CD4-positive, alpha-beta memory T cell (primary cell): ENCODE measurements at regions of chr3 and their contacts with region 1.

Region 1: DNA sequence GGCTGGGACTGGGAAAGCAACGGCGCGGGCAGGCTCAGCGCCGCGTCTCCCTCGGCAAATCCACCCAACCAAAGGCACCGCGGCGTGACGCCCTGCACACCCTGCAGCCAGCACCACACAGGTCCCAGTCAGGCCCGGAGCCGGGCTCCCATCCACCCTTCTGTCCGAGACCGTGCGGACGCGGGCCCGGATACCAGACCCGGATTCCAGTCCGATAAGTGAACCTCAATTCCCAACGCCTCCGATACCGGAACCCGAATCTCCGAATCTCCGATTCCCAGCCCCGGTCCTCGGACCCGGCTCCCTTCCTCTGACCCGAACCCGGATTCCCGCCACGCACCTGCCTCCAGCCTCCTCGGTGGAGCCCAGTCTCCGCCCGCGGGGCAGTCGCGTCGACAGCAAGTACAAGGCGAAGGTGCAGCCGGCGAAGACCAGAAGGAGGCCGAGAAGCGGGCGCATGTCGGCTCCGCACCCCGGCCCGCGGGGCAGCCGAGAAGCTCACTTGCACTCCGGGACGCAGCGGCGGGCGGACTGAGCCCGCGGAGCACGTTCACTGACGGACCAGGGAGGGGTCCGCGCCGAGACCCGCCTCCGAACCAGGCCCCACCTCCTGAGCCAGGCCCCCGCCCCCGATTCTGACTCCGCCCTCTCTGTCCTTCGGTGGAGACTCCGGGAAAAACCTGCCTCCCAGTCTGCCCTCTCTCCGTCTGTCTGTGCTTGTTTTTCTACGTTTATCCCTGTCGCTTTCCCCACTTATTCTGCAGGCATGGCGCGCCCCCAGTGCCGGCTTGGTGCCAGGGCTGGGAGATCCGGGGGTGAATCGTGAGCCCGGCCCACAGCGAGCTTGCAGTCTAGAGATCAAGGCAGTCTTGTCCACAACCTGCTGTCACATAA is at the start of gene TMEM41A:
- DNase-seq: peak; percentile 81 to 88 (median 87)
- H3K4me3 ChIP-seq: peak within 1 kb of the TSS; percentile 72 to 86
- H3K4me3 Mint-ChIP-seq: peak within 1 kb of the TSS; percentile 88 to 98 (median 94)
- H3K27ac ChIP-seq: peak within 1 kb of the TSS; percentile 64
- H3K27ac Mint-ChIP-seq: peak within 1 kb of the TSS; percentile 85 to 94 (median 91)
- H3K4me1 ChIP-seq: peaks cover 23% of the 10 kb centered on the region
- H3K4me1 Mint-ChIP-seq: peaks cover 4 to 38% (median 21%) of the 10 kb centered on the region in 4 donors
- H3K27me3 ChIP-seq: no peaks in the 10 kb centered on the region
- H3K27me3 Mint-ChIP-seq: no peaks in the 10 kb centered on the region
- total RNA-seq, gene TMEM41A: 26.5 to 28.0 TPM

Region 2: DNA sequence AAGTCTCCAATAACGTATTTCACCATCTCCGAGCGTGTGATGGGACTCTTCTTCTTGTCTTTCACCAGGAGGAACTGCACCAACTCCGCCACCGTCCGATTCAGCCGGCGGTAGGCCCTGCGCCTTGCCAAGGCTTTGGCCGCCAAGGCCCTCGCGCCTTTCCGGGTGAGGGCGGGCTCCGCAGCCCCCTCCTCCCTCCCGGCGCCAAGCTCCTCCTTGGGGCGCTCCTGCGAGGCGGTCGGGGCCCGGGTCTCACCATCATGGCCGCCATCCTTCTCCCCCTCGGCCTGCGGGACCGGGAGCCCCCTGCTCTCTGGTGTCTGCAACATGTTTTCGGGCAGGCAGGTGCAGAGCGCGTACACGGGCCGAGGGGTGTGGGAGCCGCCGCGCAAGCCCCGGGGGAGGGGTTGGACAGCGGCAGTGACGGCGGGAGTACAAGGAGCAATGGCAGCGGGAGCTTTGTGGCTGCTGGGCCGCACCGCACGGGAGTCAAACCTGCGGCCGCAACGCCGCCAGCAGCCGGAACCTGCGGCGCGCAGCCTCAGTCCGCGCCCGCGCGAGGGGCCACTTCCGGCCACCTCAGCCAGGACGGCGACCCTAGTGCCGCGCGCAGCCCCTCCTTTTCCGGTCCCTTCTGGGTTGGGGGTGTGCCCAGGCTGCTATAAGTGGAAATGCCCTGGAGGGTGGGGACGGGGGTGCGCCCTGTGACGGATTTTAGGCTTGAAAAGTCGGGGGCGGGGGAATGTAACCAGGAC is 787.1 kb before region 1 on chr3 and contains the start of gene MAGEF1:
- CTCF ChIA-PET with region 1: no interaction called
- POLR2A ChIA-PET with region 1: no interaction called
- intact Hi-C with region 1: no loop called
- DNase-seq: peak; percentile 65 to 80 (median 71)
- H3K4me3 ChIP-seq: peak within 1 kb of the TSS; percentile 43 to 69
- H3K4me3 Mint-ChIP-seq: peak within 1 kb of the TSS; percentile 86 to 97 (median 94)
- H3K27ac ChIP-seq: peak within 1 kb of the TSS; percentile 63
- H3K27ac Mint-ChIP-seq: peak within 1 kb of the TSS; percentile 69 to 97 (median 95)
- H3K4me1 ChIP-seq: peaks cover 21% of the 10 kb centered on the region
- H3K4me1 Mint-ChIP-seq: peaks cover 26 to 33% (median 30%) of the 10 kb centered on the region in 4 donors
- H3K27me3 ChIP-seq: no peaks in the 10 kb centered on the region
- H3K27me3 Mint-ChIP-seq: no peaks in the 10 kb centered on the region
- total RNA-seq, gene MAGEF1: 16.4 to 16.5 TPM

Region 3: DNA sequence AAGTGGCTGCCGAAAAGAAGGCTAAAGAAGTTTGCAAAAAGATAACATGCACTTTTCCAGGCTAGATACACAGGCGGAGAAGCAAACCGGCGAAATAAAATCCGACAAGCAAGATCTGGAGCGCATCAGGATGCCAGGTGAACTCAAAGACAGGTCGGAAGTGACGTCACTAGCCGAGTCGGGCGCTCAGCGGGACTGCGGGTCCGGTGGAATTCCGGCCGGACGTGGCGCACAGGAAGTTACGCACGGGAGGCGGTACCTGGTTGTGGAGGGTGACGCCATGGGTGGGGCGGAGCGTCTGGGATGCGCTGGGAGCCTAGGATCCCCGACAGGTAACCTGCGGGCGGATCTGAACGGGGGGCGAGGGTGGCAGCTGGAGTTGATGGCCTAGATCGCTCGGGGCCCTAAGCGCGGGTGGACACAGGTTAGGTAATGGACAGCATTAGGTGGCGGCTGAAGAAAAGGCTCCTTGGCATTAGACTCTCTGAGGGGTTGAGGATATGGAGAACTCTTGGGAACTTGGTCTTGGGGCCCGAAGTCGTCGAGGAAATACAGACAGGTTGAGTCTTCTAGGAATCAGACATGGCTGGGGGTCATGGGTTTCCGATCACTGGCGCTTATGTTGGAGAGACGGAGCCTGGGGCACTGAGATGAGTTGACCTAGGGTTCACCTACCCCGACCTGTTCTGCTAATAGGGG is 215.9 kb before region 1 on chr3:
- CTCF ChIA-PET with region 1: no interaction called
- POLR2A ChIA-PET with region 1: no interaction called
- intact Hi-C with region 1: loop called (anchors 2 kb)
- DNase-seq: peak; percentile 88 to 95 (median 91)
- H3K4me3 ChIP-seq: peak overlapping the region; percentile 67
- H3K4me3 Mint-ChIP-seq: peak overlapping the region; percentile 91 to 98 (median 94)
- H3K27ac ChIP-seq: peak overlapping the region; percentile 60
- H3K27ac Mint-ChIP-seq: peak overlapping the region; percentile 91 to 99 (median 97)
- H3K4me1 ChIP-seq: peaks cover 11% of the 10 kb centered on the region
- H3K4me1 Mint-ChIP-seq: peaks cover 8 to 27% (median 14%) of the 10 kb centered on the region in 4 donors
- H3K27me3 ChIP-seq: no peaks in the 10 kb centered on the region
- H3K27me3 Mint-ChIP-seq: peaks cover 12 to 14% of the 10 kb centered on the region in 2 donors

Region 4: DNA sequence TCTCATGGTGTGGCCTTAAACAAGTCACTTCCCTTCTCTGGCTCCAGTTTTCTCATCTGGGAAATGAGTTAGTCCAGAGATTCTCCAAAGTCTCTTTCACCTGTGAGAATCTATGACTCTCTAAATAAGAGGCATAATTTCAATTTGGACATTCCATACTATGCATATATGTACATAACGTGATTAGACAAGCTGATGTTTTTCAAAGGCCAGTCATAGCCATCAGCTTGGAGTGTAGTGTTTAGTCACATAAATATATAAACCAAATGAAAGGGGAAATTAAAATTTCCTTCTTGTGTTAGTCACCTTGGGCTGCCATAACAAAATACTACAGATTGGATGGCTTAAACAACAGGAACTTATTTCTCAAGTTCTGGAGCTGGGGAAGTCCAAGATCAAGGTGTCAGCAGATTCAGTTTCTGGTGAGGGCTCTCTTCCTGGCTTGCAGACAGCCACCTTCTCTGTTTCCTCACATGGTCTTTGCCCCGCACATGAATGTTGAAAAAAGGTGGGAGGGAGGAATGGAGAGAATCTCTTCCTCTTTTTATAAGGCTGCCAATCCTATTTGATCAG is 19.3 kb before region 1 on chr3:
- CTCF ChIA-PET with region 1: no interaction called
- POLR2A ChIA-PET with region 1: no interaction called
- intact Hi-C with region 1: no loop called
- DNase-seq: no peak
- H3K4me3 ChIP-seq: no peak overlapping the region
- H3K4me3 Mint-ChIP-seq: no peak overlapping the region
- H3K27ac ChIP-seq: no peak overlapping the region
- H3K27ac Mint-ChIP-seq: no peak overlapping the region
- H3K4me1 ChIP-seq: peaks cover 5% of the 10 kb centered on the region
- H3K4me1 Mint-ChIP-seq: peaks cover 4 to 15% (median 10%) of the 10 kb centered on the region in 4 donors
- H3K27me3 ChIP-seq: no peaks in the 10 kb centered on the region
- H3K27me3 Mint-ChIP-seq: no peaks in the 10 kb centered on the region

Region 5: GRCh38 chr3:185717121-185717520 is 218.4 kb after region 1 on chr3:
- CTCF ChIA-PET with region 1: no interaction called
- POLR2A ChIA-PET with region 1: no interaction called
- intact Hi-C with region 1: no loop called
- DNase-seq: no peak
- H3K4me3 ChIP-seq: no peak overlapping the region
- H3K4me3 Mint-ChIP-seq: no peak overlapping the region
- H3K27ac ChIP-seq: no peak overlapping the region
- H3K27ac Mint-ChIP-seq: no peak overlapping the region
- H3K4me1 ChIP-seq: no peaks in the 10 kb centered on the region
- H3K4me1 Mint-ChIP-seq: no peaks in the 10 kb centered on the region
- H3K27me3 ChIP-seq: no peaks in the 10 kb centered on the region
- H3K27me3 Mint-ChIP-seq: peaks cover 13 to 19% of the 10 kb centered on the region in 2 donors